A673 (cell line): ENCODE measurements at regions of chr12 and their contacts with region 1.

Region 1: GRCh38 chr12:51128919-51129318 is 44.0 kb downstream of the TFCP2 start:
- DNase-seq: peak; percentile 9
- H3K4me3 ChIP-seq: no peak overlapping the region
- H3K27ac ChIP-seq: no peak overlapping the region
- H3K4me1 ChIP-seq: peaks cover 15% of the 10 kb centered on the region
- H3K27me3 ChIP-seq: no peaks in the 10 kb centered on the region
- CTCF ChIP-seq: no peak

Region 2: GRCh38 chr12:51070004-51070403 is 58.9 kb before region 1 on chr12:
- CTCF ChIA-PET with region 1: no interaction called
- POLR2A ChIA-PET with region 1: no interaction called
- intact Hi-C with region 1: no loop called
- DNase-seq: peak; percentile 34
- H3K4me3 ChIP-seq: no peak overlapping the region
- H3K27ac ChIP-seq: peak overlapping the region; percentile 62
- H3K4me1 ChIP-seq: peaks cover 10% of the 10 kb centered on the region
- H3K27me3 ChIP-seq: no peaks in the 10 kb centered on the region
- CTCF ChIP-seq: no peak

Region 3: GRCh38 chr12:51147309-51147708 is 18.4 kb after region 1 on chr12:
- CTCF ChIA-PET with region 1: no interaction called
- POLR2A ChIA-PET with region 1: no interaction called
- intact Hi-C with region 1: loop called (anchors 1 kb)
- DNase-seq: no peak
- H3K4me3 ChIP-seq: no peak overlapping the region
- H3K27ac ChIP-seq: no peak overlapping the region
- H3K4me1 ChIP-seq: no peaks in the 10 kb centered on the region
- H3K27me3 ChIP-seq: no peaks in the 10 kb centered on the region
- CTCF ChIP-seq: no peak

Region 4: GRCh38 chr12:52069327-52070184 is 940.6 kb after region 1 on chr12 and contains the start of gene ATG101:
- CTCF ChIA-PET with region 1: no interaction called
- POLR2A ChIA-PET with region 1: no interaction called
- intact Hi-C with region 1: no loop called
- DNase-seq: peak; percentile 97
- H3K4me3 ChIP-seq: peak within 1 kb of the TSS; percentile 98
- H3K27ac ChIP-seq: peak within 1 kb of the TSS; percentile 100
- H3K4me1 ChIP-seq: peaks cover 9% of the 10 kb centered on the region
- H3K27me3 ChIP-seq: no peaks in the 10 kb centered on the region
- CTCF ChIP-seq: peak; percentile 92
- total RNA-seq, gene ATG101: 52.0 and 54.3 TPM in 2 replicates